ENCODE measurements at regions of chr9 and their contacts with region 1.

Region 1: DNA sequence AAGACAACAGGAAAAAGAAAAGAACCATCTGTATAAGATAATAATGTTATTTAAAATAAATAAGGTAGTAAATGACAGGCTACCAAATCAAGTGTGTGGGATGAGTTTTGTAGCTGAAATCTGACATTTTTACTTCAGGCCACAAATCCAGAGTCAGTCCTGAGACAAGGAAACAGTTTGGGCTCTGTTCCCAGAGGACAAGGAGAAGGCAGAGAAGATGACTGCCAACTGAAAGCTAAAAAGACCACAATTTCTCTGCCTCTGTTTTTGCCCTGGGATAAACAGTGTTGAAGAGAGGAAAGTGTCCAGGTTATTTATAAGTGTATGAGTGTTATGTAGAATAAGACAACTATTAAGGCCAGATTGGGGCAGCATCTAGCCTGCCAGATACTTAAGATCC is 180.5 kb downstream of the NFIB start:
- DNase-seq: no peak
- ATAC-seq: no peak
- H3K4me3 ChIP-seq: no peak overlapping the region
- H3K27ac ChIP-seq: no peak overlapping the region
- H3K4me1 ChIP-seq: peaks cover 0 to 27% (median 11%) of the 10 kb centered on the region in 3 donors
- H3K27me3 ChIP-seq: no peaks in the 10 kb centered on the region
- CTCF ChIP-seq: no peak

Region 2: DNA sequence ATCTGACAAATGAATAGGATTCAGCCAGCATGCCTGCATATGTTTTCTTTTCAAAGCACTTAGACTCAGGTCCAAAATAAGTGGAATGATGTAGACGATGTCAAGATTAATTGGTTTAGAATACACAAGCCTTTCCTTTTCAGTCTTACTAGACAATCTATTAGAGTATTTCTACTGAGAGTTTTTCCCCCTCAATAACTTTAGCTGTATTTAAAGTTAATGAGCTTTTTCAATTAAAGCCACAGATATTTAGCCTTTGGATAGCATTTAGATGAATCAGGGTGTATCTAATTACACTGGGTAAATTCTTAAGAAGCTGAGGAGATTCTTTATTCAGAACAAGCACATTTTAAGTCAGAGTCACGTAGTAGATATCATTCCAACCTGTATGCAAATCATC is 655.2 kb before region 1 on chr9:
- intact Hi-C with region 1: loop called in 1 of 3 experiments (anchors 5 kb)
- DNase-seq: no peak
- ATAC-seq: no peak
- H3K4me3 ChIP-seq: no peak overlapping the region
- H3K27ac ChIP-seq: no peak overlapping the region
- H3K4me1 ChIP-seq: peaks cover 0 to 4% (median 0%) of the 10 kb centered on the region in 3 donors
- H3K27me3 ChIP-seq: no peaks in the 10 kb centered on the region
- CTCF ChIP-seq: no peak